Endothelial cell of umbilical vein (primary cell): ENCODE measurements at regions of chrX and their contacts with region 1.

Region 1: DNA sequence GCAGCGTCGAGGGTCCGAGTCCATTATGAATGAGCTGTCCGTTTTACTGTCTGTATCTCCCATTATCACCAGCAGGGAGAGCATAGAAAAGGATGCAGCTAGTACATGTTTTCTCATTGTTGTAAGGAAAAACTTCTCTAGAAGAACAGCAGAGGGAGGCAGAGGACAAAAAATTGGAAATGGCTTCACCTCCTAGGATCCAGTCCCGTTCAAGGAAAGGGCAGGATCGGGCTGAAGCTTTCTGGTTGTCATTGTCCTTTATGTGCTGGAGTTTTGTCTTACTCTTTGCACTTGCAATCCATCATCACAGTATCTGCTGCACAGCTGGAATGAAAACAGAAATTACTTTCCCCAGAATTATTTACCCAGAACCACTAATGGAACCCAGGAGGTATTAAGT is 14.7 kb downstream of the NDP start:
- DNase-seq: peak; percentile 77
- H3K4me3 ChIP-seq: no peak overlapping the region
- H3K27ac ChIP-seq: no peak overlapping the region
- H3K4me1 ChIP-seq: no peaks in the 10 kb centered on the region
- H3K27me3 ChIP-seq: no peaks in the 10 kb centered on the region
- CTCF ChIP-seq: peak; percentile 54 to 56
- POLR2A ChIP-seq: no peak

Region 2: DNA sequence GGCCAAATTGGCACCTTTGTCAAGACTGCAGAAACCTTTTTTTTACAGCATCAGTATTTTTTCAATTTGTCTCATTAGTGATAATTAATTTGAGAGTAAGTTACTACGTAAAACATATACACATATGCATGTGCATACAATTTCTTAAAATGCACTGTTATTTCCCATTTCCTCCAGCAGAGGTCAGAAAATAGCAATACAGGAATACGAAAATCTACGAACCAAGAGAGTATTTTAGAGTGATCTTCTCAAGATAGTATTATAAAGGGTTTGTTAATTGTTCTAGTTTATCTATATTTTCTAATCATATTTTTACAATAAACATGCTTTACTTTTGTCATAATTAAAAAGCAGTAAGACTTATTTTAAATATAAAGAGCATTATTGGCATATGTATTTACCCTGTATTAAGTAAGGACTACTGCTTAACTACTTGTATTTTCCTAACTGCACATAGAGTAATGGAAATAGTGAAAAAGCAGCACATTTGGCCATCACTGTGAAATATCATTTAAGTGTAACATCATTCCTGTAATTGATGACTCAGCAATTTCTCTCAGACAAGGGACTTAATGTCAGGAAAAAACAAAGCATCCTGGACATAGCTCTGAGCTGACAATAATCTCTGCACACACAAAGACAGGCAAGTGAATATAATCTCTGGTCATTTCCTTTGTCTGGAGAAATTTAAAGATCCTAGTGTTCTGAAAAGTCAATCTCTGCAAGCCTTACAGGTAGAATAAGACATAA is 121.9 kb before region 1 on chrX:
- CTCF ChIA-PET with region 1: interaction called, 18 read pairs
- POLR2A ChIA-PET with region 1: no interaction called
- dilution Hi-C with region 1: no loop called
- intact Hi-C with region 1: loop called (anchors 1 kb)
- DNase-seq: peak; percentile 35
- H3K4me3 ChIP-seq: no peak overlapping the region
- H3K27ac ChIP-seq: no peak overlapping the region
- H3K4me1 ChIP-seq: no peaks in the 10 kb centered on the region
- H3K27me3 ChIP-seq: peaks cover 0 to 1% of the 10 kb centered on the region in 2 experiments
- CTCF ChIP-seq: peak; percentile 4 to 10
- POLR2A ChIP-seq: no peak

Region 3: GRCh38 chrX:44025555-44025954 is 67.0 kb after region 1 on chrX:
- CTCF ChIA-PET with region 1: interaction called, 60 read pairs
- POLR2A ChIA-PET with region 1: no interaction called
- dilution Hi-C with region 1: no loop called
- intact Hi-C with region 1: loop called (anchors 1 kb)
- DNase-seq: peak; percentile 3
- H3K4me3 ChIP-seq: no peak overlapping the region
- H3K27ac ChIP-seq: no peak overlapping the region
- H3K4me1 ChIP-seq: no peaks in the 10 kb centered on the region
- H3K27me3 ChIP-seq: no peaks in the 10 kb centered on the region
- CTCF ChIP-seq: no peak
- POLR2A ChIP-seq: no peak

Region 4: DNA sequence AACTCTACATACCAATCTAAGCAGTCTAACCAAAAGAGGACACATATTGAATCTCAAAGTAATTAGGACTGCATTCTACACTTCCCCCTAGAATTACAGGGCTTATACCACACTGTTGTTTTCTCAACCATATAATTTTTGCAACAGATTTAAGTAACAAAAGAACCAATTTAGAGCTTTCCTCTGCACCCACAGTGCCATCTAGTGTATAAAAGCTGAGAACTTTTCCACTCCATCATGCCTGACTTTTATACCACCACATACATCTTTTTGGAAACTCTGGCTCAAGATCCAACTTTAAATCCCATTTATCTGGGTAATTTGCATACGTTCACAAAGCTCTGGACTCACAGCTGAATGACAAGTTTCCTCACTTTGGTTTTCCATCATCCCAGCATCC is 285.5 kb after region 1 on chrX:
- CTCF ChIA-PET with region 1: interaction called, 115 read pairs
- POLR2A ChIA-PET with region 1: no interaction called
- dilution Hi-C with region 1: no loop called
- intact Hi-C with region 1: loop called (anchors 1 kb)
- DNase-seq: peak; percentile 34
- H3K4me3 ChIP-seq: no peak overlapping the region
- H3K27ac ChIP-seq: no peak overlapping the region
- H3K4me1 ChIP-seq: no peaks in the 10 kb centered on the region
- H3K27me3 ChIP-seq: no peaks in the 10 kb centered on the region
- CTCF ChIP-seq: peak in 1 of 2 donors; percentile 31
- POLR2A ChIP-seq: no peak

Region 5: GRCh38 chrX:45186643-45187026 is 1228.1 kb after region 1 on chrX:
- CTCF ChIA-PET with region 1: interaction called, 6 read pairs
- POLR2A ChIA-PET with region 1: no interaction called
- dilution Hi-C with region 1: no loop called
- intact Hi-C with region 1: loop called (anchors 2 kb)
- DNase-seq: no peak
- H3K4me3 ChIP-seq: peak overlapping the region in 1 of 3 experiments; percentile 46
- H3K27ac ChIP-seq: no peak overlapping the region
- H3K4me1 ChIP-seq: peaks cover 9% of the 10 kb centered on the region
- H3K27me3 ChIP-seq: no peaks in the 10 kb centered on the region
- CTCF ChIP-seq: no peak
- POLR2A ChIP-seq: no peak